Activated T-helper 1 cell treated with anti-CD3 and anti-CD28 coated beads, Interleukin-12 subunit alpha, Interleukin-12 subunit beta, Interleukin-2, Interleukin-4 antibody, amounts not matched to agents 30 ng/mL and 10 ng/mL and 1 ng/mL, durations not matched to agents 14 hours and 24 hours and 36 hours (primary cell): ENCODE measurements at regions of chr1 and their contacts with region 1.

Region 1: GRCh38 chr1:225777583-225778336 is at the start of gene SRP9:
- DNase-seq: peak; percentile 99
- H3K4me3 Mint-ChIP-seq: no peak within 1 kb of the TSS
- H3K27ac Mint-ChIP-seq: no peak within 1 kb of the TSS
- H3K4me1 Mint-ChIP-seq: peaks cover 29% of the 10 kb centered on the region
- H3K27me3 Mint-ChIP-seq: no peaks in the 10 kb centered on the region
- total RNA-seq, gene SRP9: 230 and 233 TPM in 2 replicates

Region 2: DNA sequence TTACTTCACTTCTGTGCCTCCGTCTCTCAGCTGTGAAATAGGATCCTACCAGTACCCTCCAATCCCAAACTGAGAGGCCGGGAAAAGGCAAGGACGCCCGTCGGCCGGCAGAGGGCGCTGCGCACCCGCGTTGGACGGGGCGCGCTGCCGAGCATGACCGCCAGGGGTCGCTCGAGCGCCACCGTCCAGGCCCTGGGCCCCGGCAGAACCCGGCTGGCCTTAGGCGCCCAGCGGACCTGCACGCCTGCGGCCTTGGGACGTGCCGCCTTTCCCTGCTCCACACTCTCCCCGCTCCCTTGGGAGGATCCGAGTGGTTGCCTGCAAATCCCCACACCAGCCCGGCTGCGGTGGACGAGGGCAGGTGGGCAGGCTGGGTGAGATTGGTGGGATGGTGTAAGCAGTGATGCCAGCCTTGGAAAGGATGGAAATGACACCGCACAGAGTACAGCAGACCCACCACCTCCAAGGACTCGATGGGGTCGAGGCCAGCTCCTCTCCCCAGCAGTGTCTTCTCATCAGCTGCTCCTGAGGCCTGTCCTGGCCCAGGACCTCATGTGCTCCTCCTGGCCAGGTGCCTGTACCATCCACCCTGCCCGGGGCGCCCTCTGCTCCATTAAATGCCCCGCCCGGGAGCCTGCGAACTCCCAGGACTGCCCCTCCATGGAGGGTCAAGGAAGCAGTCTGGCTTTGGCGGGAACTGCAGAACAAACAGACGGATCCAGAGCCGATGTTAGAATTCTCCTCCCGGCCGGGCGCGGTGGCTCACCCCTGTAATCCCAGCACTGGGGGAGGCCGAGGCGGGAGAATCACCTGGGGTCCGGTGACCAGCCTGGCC is 302.6 kb before region 1 on chr1:
- intact Hi-C with region 1: loop called (anchors 1 kb)
- DNase-seq: peak; percentile 69
- H3K4me3 Mint-ChIP-seq: no peak overlapping the region
- H3K27ac Mint-ChIP-seq: no peak overlapping the region
- H3K4me1 Mint-ChIP-seq: peaks cover 41% of the 10 kb centered on the region
- H3K27me3 Mint-ChIP-seq: peaks cover 2% of the 10 kb centered on the region

Region 3: GRCh38 chr1:225578251-225578950 is 199.4 kb before region 1 on chr1:
- intact Hi-C with region 1: no loop called
- DNase-seq: no peak
- H3K4me3 Mint-ChIP-seq: no peak overlapping the region
- H3K27ac Mint-ChIP-seq: no peak overlapping the region
- H3K4me1 Mint-ChIP-seq: no peaks in the 10 kb centered on the region
- H3K27me3 Mint-ChIP-seq: peaks cover 11% of the 10 kb centered on the region

Region 4: GRCh38 chr1:225881969-225882693 is 104.4 kb after region 1 on chr1 and contains the start of gene TMEM63A:
- intact Hi-C with region 1: loop called (anchors 1 kb)
- DNase-seq: peak; percentile 82
- H3K4me3 Mint-ChIP-seq: peak within 1 kb of the TSS; percentile 86
- H3K27ac Mint-ChIP-seq: peak within 1 kb of the TSS; percentile 77
- H3K4me1 Mint-ChIP-seq: peaks cover 52% of the 10 kb centered on the region
- H3K27me3 Mint-ChIP-seq: peaks cover 19% of the 10 kb centered on the region
- total RNA-seq, gene TMEM63A: 20.4 and 23.4 TPM in 2 replicates

Region 5: GRCh38 chr1:225911191-225912130 is 133.7 kb after region 1 on chr1:
- intact Hi-C with region 1: loop called (anchors 1 kb)
- DNase-seq: peak; percentile 59
- H3K4me3 Mint-ChIP-seq: no peak overlapping the region
- H3K27ac Mint-ChIP-seq: no peak overlapping the region
- H3K4me1 Mint-ChIP-seq: peaks cover 16% of the 10 kb centered on the region
- H3K27me3 Mint-ChIP-seq: peaks cover 2% of the 10 kb centered on the region

Region 6: DNA sequence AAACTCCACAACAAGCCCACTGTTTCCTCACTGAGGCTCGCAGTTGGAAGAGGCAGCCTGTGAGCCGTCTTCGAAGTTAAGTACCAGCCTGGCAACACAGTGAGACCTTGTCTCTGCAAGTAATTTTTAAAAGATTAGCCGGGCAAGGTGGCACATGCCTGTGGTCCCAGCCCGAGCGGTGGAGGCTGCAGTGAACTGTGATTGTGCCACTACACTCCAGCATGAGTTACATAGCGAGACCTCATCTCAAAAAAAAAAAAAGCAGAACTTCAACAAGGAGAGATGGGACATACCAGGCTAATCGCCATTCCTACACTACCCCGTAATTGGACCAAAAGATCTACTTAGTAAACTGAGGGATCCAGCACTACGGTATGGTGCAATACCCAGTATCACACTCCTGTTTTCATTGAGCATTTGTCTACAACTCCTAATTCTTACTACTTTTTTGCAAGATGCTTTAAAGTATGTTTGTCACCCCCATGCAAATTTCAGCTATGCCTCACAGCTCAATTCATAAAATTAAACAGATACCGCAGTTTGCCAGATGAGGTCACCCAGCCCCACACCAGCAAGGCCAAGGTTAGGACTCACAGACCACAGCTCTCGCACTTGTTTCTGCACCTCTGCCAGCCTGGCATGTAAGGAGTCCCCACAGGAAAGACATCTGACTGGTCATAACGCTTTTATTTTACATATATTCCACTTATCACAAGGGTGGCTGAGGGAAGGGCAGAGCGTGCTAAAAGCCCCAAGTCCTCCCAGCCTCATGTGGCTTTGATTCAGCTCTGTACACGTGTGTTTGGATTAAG is 200.4 kb after region 1 on chr1:
- intact Hi-C with region 1: loop called (anchors 1 kb)
- DNase-seq: no peak
- H3K4me3 Mint-ChIP-seq: no peak overlapping the region
- H3K27ac Mint-ChIP-seq: peak overlapping the region; percentile 11
- H3K4me1 Mint-ChIP-seq: peaks cover 21% of the 10 kb centered on the region
- H3K27me3 Mint-ChIP-seq: no peaks in the 10 kb centered on the region

Region 7: GRCh38 chr1:226083302-226084101 is 305.7 kb after region 1 on chr1:
- intact Hi-C with region 1: loop called (anchors 1 kb)
- DNase-seq: peak; percentile 91
- H3K4me3 Mint-ChIP-seq: peak overlapping the region; percentile 89
- H3K27ac Mint-ChIP-seq: peak overlapping the region; percentile 79
- H3K4me1 Mint-ChIP-seq: peaks cover 12% of the 10 kb centered on the region
- H3K27me3 Mint-ChIP-seq: peaks cover 15% of the 10 kb centered on the region